ENCODE measurements at regions of chr13 and their contacts with region 1.

Region 1: DNA sequence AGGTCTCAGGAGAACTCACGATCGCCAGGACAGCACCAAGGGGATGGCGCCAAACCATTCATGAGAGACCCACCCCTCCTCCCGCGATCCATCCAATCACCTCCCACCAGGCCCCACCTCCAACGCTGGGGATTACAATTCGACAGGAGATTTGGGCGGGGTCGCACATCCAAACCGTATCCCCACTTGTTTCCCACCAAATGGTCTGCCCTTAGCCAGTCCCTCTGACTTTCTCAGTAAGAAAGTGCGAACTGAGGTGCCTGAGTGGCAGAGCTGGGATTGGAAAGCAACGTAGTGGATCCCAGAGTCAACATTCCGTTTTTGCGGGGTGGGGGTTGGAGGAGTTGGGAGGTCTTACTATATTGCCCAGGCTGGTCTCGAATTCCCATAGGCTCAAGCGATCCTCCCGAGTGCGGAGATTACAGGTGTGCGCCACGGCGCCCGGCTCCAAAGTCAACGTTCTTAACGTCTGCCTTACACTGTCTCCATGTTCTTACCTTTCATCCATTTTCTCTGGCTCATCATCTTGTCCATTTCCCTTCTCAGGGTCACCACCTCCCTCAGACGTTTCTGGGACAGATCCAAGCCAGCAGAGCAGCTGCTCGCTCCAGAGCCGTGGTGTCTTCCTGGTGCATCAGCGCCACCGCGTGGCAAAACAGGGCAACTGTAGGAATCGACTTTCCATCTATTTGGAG is 102.7 kb upstream of the ABCC4 start:
- DNase-seq: peak; percentile 78
- ATAC-seq: peak; percentile 80
- H3K4me3 ChIP-seq: peak overlapping the region in 4 of 5 experiments; percentile 15 to 53 (median 30)
- H3K4me3 Mint-ChIP-seq: peak overlapping the region; percentile 89
- H3K27ac ChIP-seq: no peak overlapping the region
- H3K27ac Mint-ChIP-seq: no peak overlapping the region
- H3K4me1 ChIP-seq: peaks cover 9% of the 10 kb centered on the region in 2 donors
- H3K4me1 Mint-ChIP-seq: peaks cover 9% of the 10 kb centered on the region
- H3K27me3 ChIP-seq: peaks cover 0 to 18% (median 8%) of the 10 kb centered on the region in 4 experiments
- H3K27me3 Mint-ChIP-seq: peaks cover 28% of the 10 kb centered on the region
- CTCF ChIP-seq: peak; percentile 93

Region 2: GRCh38 chr13:95181586-95181985 is 222.4 kb before region 1 on chr13:
- CTCF ChIA-PET with region 1: interaction called, 477 read pairs
- POLR2A ChIA-PET with region 1: no interaction called
- intact Hi-C with region 1: no loop called
- DNase-seq: no peak
- ATAC-seq: no peak
- H3K4me3 ChIP-seq: no peak overlapping the region
- H3K4me3 Mint-ChIP-seq: no peak overlapping the region
- H3K27ac ChIP-seq: no peak overlapping the region
- H3K27ac Mint-ChIP-seq: no peak overlapping the region
- H3K4me1 ChIP-seq: peaks cover 6 to 10% of the 10 kb centered on the region in 2 donors
- H3K4me1 Mint-ChIP-seq: peaks cover 14% of the 10 kb centered on the region
- H3K27me3 ChIP-seq: no peaks in the 10 kb centered on the region
- H3K27me3 Mint-ChIP-seq: no peaks in the 10 kb centered on the region
- CTCF ChIP-seq: no peak

Region 3: DNA sequence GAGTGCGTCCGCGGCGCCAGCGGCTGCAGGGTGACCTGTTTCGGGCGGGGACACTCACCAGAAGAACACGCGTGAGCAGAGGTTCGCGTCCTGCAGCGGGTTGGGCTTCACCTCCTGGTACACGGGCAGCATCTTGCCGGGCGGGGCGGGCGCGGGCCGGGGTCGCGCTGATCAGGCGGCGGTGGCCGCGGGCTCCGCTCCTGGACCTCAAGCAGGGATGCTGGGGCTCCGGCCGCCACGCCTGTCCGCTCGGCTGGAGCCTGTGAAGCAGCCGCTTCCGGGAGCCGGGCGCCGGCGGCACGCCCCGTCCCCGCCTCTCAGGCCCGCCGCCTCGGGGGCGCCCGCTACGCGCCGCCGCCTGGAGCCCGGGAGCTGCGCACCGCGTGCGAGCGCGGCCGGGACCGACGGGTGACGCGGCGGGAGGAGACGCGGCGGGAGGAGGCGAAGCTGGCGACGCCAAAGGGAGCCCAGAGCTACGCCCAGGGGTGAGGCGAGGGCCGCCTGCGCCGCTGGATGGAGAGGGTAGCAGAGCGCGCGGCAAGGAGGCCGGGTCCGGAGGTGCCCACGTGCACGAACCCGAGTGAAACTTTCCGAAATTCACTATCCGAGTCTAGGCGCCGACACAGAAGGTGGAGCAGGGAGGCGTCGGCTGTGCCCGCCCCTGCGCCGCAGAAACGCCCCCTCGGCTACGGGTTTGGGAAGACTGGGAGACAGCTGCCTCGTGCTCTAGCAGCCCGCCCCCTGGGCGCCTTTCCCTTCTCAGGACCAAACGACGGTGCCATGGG is 102.6 kb before region 1 on chr13 and contains the start of gene ABCC4:
- CTCF ChIA-PET with region 1: interaction called, 54 read pairs
- POLR2A ChIA-PET with region 1: no interaction called
- intact Hi-C with region 1: loop called (anchors 1 kb)
- DNase-seq: peak; percentile 69
- ATAC-seq: peak; percentile 75
- H3K4me3 ChIP-seq: peak within 1 kb of the TSS; percentile 2 to 80 (median 63)
- H3K4me3 Mint-ChIP-seq: peak within 1 kb of the TSS; percentile 85
- H3K27ac ChIP-seq: no peak within 1 kb of the TSS
- H3K27ac Mint-ChIP-seq: peak within 1 kb of the TSS; percentile 53
- H3K4me1 ChIP-seq: peaks cover 12 to 18% of the 10 kb centered on the region in 2 donors
- H3K4me1 Mint-ChIP-seq: peaks cover 22% of the 10 kb centered on the region
- H3K27me3 ChIP-seq: peaks cover 0 to 9% (median 0%) of the 10 kb centered on the region in 4 experiments
- H3K27me3 Mint-ChIP-seq: no peaks in the 10 kb centered on the region
- CTCF ChIP-seq: no peak
- total RNA-seq, gene ABCC4: 7.1 and 7.3 TPM in 2 replicates

Region 4: GRCh38 chr13:95418946-95419345 is 15.0 kb after region 1 on chr13:
- CTCF ChIA-PET with region 1: interaction called, 13 read pairs
- POLR2A ChIA-PET with region 1: no interaction called
- intact Hi-C with region 1: no loop called
- DNase-seq: no peak
- ATAC-seq: no peak
- H3K4me3 ChIP-seq: no peak overlapping the region
- H3K4me3 Mint-ChIP-seq: no peak overlapping the region
- H3K27ac ChIP-seq: no peak overlapping the region
- H3K27ac Mint-ChIP-seq: no peak overlapping the region
- H3K4me1 ChIP-seq: no peaks in the 10 kb centered on the region
- H3K4me1 Mint-ChIP-seq: no peaks in the 10 kb centered on the region
- H3K27me3 ChIP-seq: peaks cover 0 to 5% (median 1%) of the 10 kb centered on the region in 4 experiments
- H3K27me3 Mint-ChIP-seq: peaks cover 30% of the 10 kb centered on the region
- CTCF ChIP-seq: no peak